ENCODE measurements at regions of chr16 and their contacts with region 1.

Region 1: DNA sequence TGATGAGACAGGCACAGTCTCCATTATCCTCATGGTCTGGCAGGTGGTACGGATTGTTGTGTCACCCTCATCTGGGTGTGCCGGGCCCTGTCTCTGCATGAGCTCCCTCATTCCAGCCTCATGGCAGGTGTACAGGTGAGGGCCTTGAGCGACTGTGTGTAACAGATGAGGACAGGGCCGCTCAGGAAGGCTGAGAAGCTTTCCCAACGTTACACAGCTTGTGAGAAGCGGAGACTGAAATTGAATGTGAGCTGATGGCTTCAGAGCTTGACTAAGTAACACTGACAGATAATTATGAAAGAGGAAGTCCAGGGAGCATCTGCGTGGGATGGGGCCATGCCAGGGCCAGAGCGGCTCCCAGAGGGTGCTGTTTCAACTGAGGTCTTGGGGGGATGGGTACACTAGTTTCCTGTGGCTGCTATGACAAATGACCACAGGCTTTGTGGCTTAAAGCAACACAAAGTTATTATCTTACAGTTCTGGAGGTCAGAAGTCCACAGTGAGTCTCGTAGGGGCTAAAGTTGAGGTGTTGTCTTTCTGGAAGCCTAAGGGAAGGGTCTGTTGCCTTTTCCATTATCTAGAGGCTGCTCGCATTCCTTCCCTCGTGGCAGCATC is 36.7 kb downstream of the CMIP start:
- DNase-seq: no peak
- H3K4me3 ChIP-seq: no peak overlapping the region
- CTCF ChIP-seq: no peak

Region 2: GRCh38 chr16:81469710-81470535 is 11.4 kb before region 1 on chr16:
- CTCF ChIA-PET with region 1: no interaction called
- POLR2A ChIA-PET with region 1: no interaction called
- DNase-seq: no peak
- H3K4me3 ChIP-seq: no peak overlapping the region
- CTCF ChIP-seq: no peak

Region 3: DNA sequence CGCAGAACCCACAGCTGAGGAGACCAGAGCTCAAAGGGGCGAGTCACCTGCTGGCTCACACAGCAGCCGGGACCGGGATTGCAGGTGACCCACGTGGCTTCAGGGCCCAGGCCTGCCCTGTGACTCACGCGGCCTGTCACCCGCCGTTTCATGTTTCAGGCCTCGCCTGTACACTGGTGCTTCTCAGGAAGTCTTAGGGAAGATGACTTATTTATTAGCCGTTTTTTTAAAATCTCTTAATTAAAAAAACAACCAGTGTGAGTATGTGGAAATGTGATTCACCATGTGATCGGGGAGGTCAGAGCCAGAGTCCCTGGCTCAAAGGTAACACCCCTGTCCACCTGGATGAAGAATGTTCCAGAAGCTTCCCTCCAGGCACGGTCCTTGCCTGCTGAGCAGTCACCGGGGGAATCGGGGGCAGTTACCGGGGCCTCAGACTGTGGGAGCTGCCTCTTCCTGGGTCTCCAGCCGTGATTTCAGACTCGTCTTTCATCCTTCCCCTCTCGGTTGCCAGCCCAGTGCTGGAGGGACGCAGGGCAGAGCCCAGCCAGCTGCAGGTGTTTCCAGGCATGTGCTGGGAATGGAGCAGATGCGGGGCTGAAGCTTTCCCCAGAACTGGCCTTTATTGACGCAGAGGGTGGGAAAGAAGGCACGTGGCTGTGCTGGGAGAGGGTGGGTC is 12.6 kb after region 1 on chr16:
- CTCF ChIA-PET with region 1: interaction called, 13 read pairs
- POLR2A ChIA-PET with region 1: no interaction called
- DNase-seq: peak; percentile 28
- H3K4me3 ChIP-seq: no peak overlapping the region
- CTCF ChIP-seq: no peak

Measured in AG04449 (cell line).